ENCODE measurements at regions of chr6 and their contacts with region 1.

Region 1: DNA sequence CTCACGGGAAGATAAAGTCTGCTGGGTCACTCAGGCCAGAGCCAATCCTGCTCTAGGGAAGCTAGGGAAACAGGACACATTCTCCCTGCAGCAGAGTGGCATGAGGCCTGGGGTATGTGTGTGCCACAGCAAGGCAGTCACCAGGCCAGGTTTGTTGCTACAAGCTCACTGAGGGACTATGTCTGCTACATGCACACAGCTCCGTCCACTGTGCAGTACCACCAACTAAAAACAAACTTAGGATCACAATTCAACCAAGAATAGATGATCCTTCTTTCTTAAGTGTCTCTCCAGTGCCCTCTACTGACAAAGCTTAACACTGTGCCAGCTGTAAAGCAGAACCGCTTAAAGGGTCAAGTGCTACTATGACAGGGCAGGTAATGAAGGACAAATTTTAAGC is 192.5 kb downstream of the PTPRK start:
- DNase-seq: peak; percentile 30
- H3K4me3 Mint-ChIP-seq: no peak overlapping the region
- H3K27ac Mint-ChIP-seq: no peak overlapping the region
- H3K4me1 Mint-ChIP-seq: no peaks in the 10 kb centered on the region
- H3K27me3 Mint-ChIP-seq: no peaks in the 10 kb centered on the region

Region 2: DNA sequence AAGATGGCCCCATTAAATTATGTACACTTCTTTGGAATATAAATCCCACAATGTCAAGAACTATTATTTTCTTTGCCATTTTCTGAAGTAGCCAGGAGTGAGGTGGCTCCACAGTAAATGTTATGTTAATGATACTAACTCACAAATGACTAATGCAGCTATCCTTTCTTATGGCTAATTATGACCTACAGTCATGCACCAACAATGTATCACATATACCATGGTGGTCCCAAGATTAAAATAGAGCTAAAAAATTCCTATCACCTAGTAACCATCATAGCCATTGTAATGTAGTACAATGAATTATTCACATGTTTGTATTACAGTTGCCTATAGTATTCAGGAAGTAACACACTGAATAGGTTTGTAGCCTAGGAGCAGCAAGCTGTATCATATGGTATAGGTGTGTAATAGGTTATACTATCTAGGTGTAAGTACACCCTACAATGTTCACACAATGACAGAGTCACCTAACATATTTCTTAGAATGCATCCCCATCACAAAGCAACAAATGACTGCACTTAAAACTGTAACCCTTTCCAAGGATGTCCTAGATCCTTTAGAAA is 999.8 kb before region 1 on chr6:
- CTCF ChIA-PET with region 1: no interaction called
- intact Hi-C with region 1: no loop called
- DNase-seq: no peak
- H3K4me3 Mint-ChIP-seq: no peak overlapping the region
- H3K27ac Mint-ChIP-seq: no peak overlapping the region
- H3K4me1 Mint-ChIP-seq: peaks cover 5% of the 10 kb centered on the region
- H3K27me3 Mint-ChIP-seq: no peaks in the 10 kb centered on the region

Region 3: GRCh38 chr6:128731249-128732165 is 403.6 kb after region 1 on chr6:
- CTCF ChIA-PET with region 1: no interaction called
- intact Hi-C with region 1: loop called (anchors 5 kb)
- DNase-seq: peak; percentile 10
- H3K4me3 Mint-ChIP-seq: no peak overlapping the region
- H3K27ac Mint-ChIP-seq: no peak overlapping the region
- H3K4me1 Mint-ChIP-seq: no peaks in the 10 kb centered on the region
- H3K27me3 Mint-ChIP-seq: peaks cover 17% of the 10 kb centered on the region

Measured in activated naive CD4-positive, alpha-beta T cell treated with anti-CD3 and anti-CD28 coated beads for 36 hours (primary cell).